Endothelial cell of umbilical vein (primary cell): ENCODE measurements at regions of chr3 and their contacts with region 1.

Region 1: GRCh38 chr3:43338295-43338694 is 52.0 kb downstream of the SNRK start:
- DNase-seq: no peak
- H3K4me3 ChIP-seq: no peak overlapping the region
- H3K27ac ChIP-seq: no peak overlapping the region
- H3K4me1 ChIP-seq: peaks cover 2% of the 10 kb centered on the region
- H3K27me3 ChIP-seq: no peaks in the 10 kb centered on the region
- CTCF ChIP-seq: no peak
- POLR2A ChIP-seq: no peak

Region 2: GRCh38 chr3:43353923-43354670 is 15.8 kb after region 1 on chr3:
- CTCF ChIA-PET with region 1: no interaction called
- POLR2A ChIA-PET with region 1: interaction called, 10 read pairs
- dilution Hi-C with region 1: no loop called
- intact Hi-C with region 1: no loop called
- DNase-seq: peak; percentile 32
- H3K4me3 ChIP-seq: no peak overlapping the region
- H3K27ac ChIP-seq: no peak overlapping the region
- H3K4me1 ChIP-seq: no peaks in the 10 kb centered on the region
- H3K27me3 ChIP-seq: no peaks in the 10 kb centered on the region
- CTCF ChIP-seq: no peak
- POLR2A ChIP-seq: no peak

Region 3: GRCh38 chr3:43540624-43541023 is 202.3 kb after region 1 on chr3:
- CTCF ChIA-PET with region 1: no interaction called
- POLR2A ChIA-PET with region 1: no interaction called
- dilution Hi-C with region 1: no loop called
- intact Hi-C with region 1: no loop called
- DNase-seq: no peak
- H3K4me3 ChIP-seq: no peak overlapping the region
- H3K27ac ChIP-seq: no peak overlapping the region
- H3K4me1 ChIP-seq: peaks cover 3% of the 10 kb centered on the region
- H3K27me3 ChIP-seq: no peaks in the 10 kb centered on the region
- CTCF ChIP-seq: no peak
- POLR2A ChIP-seq: no peak